Tibial artery (tissue), 4 donors: ENCODE measurements at regions of chr1 and their contacts with region 1.

Region 1: DNA sequence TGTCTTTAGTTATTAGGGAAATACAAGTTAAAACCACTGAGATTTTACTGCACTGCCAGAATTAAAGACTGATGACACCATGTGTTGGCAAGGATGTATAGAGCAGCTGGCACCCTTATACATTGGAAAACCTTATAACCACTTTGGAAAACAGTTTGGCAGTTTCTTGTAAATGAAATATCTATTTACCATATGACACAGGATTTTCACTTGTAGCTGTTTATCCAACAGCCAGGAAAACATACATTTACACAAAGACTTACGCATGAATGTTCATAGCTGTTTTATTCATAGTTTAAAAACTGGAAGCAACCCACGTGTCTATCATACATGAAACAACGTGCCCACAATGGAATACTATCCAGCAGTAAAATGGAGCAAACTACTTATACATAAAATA is 45.3 kb downstream of the PRRC2C start:
- DNase-seq: no peak
- H3K4me3 ChIP-seq: no peak overlapping the region
- H3K27ac ChIP-seq: no peak overlapping the region
- H3K4me1 ChIP-seq: no peaks in the 10 kb centered on the region
- H3K27me3 ChIP-seq: no peaks in the 10 kb centered on the region
- CTCF ChIP-seq: no peak

Region 2: GRCh38 chr1:170707959-170708655 is 822.6 kb before region 1 on chr1:
- intact Hi-C with region 1: no loop called
- DNase-seq: peak in 1 of 2 donors; percentile 31
- H3K4me3 ChIP-seq: no peak overlapping the region
- H3K27ac ChIP-seq: peak overlapping the region; percentile 56 to 70
- H3K4me1 ChIP-seq: peaks cover 4 to 91% (median 43%) of the 10 kb centered on the region in 4 donors
- H3K27me3 ChIP-seq: no peaks in the 10 kb centered on the region
- CTCF ChIP-seq: no peak

Region 3: GRCh38 chr1:171313835-171314320 is 216.8 kb before region 1 on chr1 and contains the start of gene FMO4:
- intact Hi-C with region 1: no loop called
- DNase-seq: peak; percentile 92 to 96
- H3K4me3 ChIP-seq: peak within 1 kb of the TSS; percentile 39 to 51
- H3K27ac ChIP-seq: peak within 1 kb of the TSS; percentile 69 to 71
- H3K4me1 ChIP-seq: peaks cover 0 to 22% (median 9%) of the 10 kb centered on the region in 4 donors
- H3K27me3 ChIP-seq: no peaks in the 10 kb centered on the region
- CTCF ChIP-seq: peak; percentile 76 to 79

Region 4: DNA sequence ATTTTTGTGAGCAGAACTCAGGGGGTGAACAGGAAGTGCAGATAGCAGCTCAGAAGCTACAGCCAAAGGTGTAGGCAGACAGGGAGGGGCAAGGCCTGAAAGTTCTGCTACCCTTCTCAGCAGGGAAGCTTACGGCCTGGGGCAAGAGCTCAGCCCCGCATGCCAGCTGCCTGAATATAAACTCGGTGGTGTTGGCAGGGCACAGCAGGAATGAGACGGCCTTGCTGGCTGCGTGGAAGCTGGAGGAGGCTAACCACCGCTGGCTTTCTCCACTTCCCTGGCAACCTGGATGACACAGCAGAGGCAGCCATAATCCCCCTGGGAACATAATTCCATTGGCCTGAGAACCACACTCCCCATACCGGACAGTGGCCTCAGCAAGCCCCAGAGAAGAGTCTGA is 127.3 kb before region 1 on chr1:
- intact Hi-C with region 1: loop called (anchors 5 kb)
- DNase-seq: no peak
- H3K4me3 ChIP-seq: no peak overlapping the region
- H3K27ac ChIP-seq: peak overlapping the region; percentile 48 to 49
- H3K4me1 ChIP-seq: peaks cover 0 to 15% (median 9%) of the 10 kb centered on the region in 4 donors
- H3K27me3 ChIP-seq: no peaks in the 10 kb centered on the region
- CTCF ChIP-seq: no peak

Region 5: GRCh38 chr1:171663854-171664575 is 133.3 kb after region 1 on chr1:
- intact Hi-C with region 1: no loop called
- DNase-seq: no peak
- H3K4me3 ChIP-seq: no peak overlapping the region
- H3K27ac ChIP-seq: peak overlapping the region; percentile 31 to 53
- H3K4me1 ChIP-seq: peaks cover 0 to 19% (median 2%) of the 10 kb centered on the region in 4 donors
- H3K27me3 ChIP-seq: no peaks in the 10 kb centered on the region
- CTCF ChIP-seq: no peak

Region 6: DNA sequence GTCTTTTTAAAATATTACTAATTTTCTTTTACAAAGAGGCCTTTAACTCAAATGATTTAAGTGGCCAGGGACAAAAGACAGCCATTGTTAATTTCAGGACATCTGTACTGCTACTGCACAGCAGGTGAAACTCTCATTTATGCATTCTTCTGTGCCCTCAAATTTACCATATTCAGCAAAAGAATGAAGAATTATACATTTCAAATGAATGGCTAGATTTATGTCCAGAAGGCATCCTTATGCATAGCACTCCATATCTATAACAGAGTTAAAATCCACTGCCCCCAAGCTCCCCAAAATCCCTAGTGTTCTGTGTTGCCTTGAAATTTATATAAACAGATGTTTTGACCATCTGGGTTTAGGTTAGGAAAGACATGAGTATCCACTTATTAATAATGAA is 513.2 kb after region 1 on chr1:
- intact Hi-C with region 1: no loop called
- DNase-seq: no peak
- H3K4me3 ChIP-seq: no peak overlapping the region
- H3K27ac ChIP-seq: no peak overlapping the region
- H3K4me1 ChIP-seq: no peaks in the 10 kb centered on the region
- H3K27me3 ChIP-seq: no peaks in the 10 kb centered on the region
- CTCF ChIP-seq: no peak